Activated CD4-positive, alpha-beta T cell treated with anti-CD3 and anti-CD28 coated beads for 36 hours (primary cell): ENCODE measurements at regions of chr6 and their contacts with region 1.

Region 1: GRCh38 chr6:166351715-166352285 is 9.5 kb upstream of the SFT2D1 start:
- DNase-seq: no peak
- ATAC-seq: no peak
- H3K4me3 Mint-ChIP-seq: no peak overlapping the region
- H3K27ac Mint-ChIP-seq: no peak overlapping the region
- H3K4me1 Mint-ChIP-seq: peaks cover 14% of the 10 kb centered on the region
- H3K27me3 Mint-ChIP-seq: peaks cover 10% of the 10 kb centered on the region

Region 2: GRCh38 chr6:166375013-166375412 is 23.2 kb after region 1 on chr6:
- CTCF ChIA-PET with region 1: interaction called, 8 read pairs
- POLR2A ChIA-PET with region 1: no interaction called
- intact Hi-C with region 1: loop called in 1 of 2 experiments (anchors 2 kb)
- DNase-seq: no peak
- ATAC-seq: peak; percentile 44
- H3K4me3 Mint-ChIP-seq: no peak overlapping the region
- H3K27ac Mint-ChIP-seq: no peak overlapping the region
- H3K4me1 Mint-ChIP-seq: peaks cover 4% of the 10 kb centered on the region
- H3K27me3 Mint-ChIP-seq: no peaks in the 10 kb centered on the region

Region 3: DNA sequence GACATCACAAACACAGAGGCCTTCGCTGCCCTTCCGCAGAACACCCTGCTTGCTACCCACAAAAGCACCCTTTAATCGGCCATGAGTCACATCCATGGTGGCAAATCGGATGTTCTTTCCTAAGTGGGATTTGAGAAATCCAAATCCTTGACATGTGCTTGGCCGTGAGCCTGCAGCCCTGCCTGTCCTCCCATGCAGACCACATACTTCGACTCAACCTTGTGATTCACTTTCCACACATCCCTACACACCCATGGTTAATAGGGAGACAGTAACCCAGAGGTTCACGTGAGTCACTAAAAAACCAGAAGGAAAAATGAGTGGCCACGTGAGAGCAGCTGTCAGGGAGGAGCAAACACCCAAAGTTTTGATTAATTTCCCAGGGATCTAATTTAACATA is 215.3 kb after region 1 on chr6:
- CTCF ChIA-PET with region 1: no interaction called
- POLR2A ChIA-PET with region 1: no interaction called
- intact Hi-C with region 1: no loop called
- DNase-seq: no peak
- ATAC-seq: no peak
- H3K4me3 Mint-ChIP-seq: no peak overlapping the region
- H3K27ac Mint-ChIP-seq: no peak overlapping the region
- H3K4me1 Mint-ChIP-seq: no peaks in the 10 kb centered on the region
- H3K27me3 Mint-ChIP-seq: no peaks in the 10 kb centered on the region